HEK293T (cell line): ENCODE measurements at regions of chr5 and their contacts with region 1.

Region 1: DNA sequence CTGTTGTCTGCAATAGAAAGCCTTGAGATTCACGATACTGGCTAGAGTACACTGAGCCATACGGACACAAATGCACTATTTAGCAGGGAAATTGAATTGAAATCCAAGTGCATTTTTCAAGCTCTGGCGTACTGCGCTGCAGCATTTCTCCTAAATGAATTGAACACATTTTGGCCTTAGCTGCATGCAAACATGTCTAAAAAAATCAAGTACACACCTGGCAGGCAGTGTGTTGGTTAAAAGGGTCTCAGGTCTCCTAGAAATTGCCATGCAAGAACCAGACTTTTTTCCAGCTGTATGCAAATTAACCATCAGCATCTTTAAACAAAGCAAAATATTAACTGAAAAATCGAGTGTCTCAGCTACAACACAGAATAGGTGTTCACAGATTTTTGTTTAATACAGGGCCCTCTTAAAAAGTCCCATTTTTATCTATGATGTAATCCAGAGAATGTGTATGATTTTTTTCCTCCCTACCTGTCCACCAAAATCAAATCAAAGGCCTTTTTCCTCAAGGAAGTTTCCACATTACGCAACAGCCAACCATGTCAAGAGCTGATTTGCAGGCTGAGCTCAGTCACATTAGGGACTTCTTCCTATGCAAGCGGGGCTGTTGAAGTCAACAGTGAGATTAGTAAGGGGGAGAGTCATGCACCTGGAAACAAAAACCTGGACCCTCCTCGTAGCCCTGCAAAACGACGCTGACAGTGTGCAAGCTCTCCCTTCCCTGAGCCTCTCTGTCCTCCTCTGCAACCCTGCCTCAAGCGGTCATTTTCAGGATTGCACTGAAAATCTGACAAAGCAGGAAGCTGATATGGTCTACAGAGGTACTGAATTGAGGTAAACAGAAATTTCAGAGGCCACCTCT is 14.1 kb upstream of the SFXN1 start:
- DNase-seq: peak; percentile 73

Region 2: GRCh38 chr5:174951146-174951780 is 513.0 kb before region 1 on chr5:
- CTCF ChIA-PET with region 1: interaction called, 10 read pairs
- POLR2A ChIA-PET with region 1: no interaction called
- DNase-seq: peak; percentile 87

Region 3: DNA sequence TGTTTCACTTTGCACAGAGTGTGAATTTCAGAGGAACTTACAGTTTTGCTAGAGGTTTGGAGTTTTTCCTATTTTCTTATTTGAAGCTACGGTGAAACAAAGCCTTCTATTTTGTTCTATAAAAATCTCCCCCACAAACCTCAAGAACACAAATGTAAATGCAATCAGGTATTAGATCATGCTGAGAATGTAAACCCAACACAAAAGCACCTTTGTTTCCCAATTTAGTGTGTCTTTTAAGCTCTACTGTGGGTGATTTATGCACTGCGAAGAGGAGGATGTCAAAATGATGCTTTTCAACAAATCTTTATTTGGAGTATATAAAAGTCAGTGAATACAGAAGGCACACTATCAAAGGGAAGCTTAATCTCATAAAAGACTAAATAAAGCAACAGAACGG is 16.0 kb before region 1 on chr5:
- CTCF ChIA-PET with region 1: interaction called, 13 read pairs
- POLR2A ChIA-PET with region 1: no interaction called
- DNase-seq: no peak

Region 4: GRCh38 chr5:175478384-175479124 is 14.2 kb after region 1 on chr5 and contains the start of gene SFXN1:
- CTCF ChIA-PET with region 1: interaction called, 33 read pairs
- POLR2A ChIA-PET with region 1: interaction called, 12 read pairs
- DNase-seq: peak; percentile 96